HEK293 (cell line): ENCODE measurements at regions of chr13 and their contacts with region 1.

Region 1: GRCh38 chr13:96958286-96958891 is 35.9 kb downstream of the OXGR1 start:
- H3K4me3 ChIP-seq: no peak overlapping the region
- H3K27ac ChIP-seq: no peak overlapping the region
- H3K4me1 ChIP-seq: no peaks in the 10 kb centered on the region
- CTCF ChIP-seq: 0 out of 2 replicates have a peak, but pooled peaks have one; percentile 13

Region 2: DNA sequence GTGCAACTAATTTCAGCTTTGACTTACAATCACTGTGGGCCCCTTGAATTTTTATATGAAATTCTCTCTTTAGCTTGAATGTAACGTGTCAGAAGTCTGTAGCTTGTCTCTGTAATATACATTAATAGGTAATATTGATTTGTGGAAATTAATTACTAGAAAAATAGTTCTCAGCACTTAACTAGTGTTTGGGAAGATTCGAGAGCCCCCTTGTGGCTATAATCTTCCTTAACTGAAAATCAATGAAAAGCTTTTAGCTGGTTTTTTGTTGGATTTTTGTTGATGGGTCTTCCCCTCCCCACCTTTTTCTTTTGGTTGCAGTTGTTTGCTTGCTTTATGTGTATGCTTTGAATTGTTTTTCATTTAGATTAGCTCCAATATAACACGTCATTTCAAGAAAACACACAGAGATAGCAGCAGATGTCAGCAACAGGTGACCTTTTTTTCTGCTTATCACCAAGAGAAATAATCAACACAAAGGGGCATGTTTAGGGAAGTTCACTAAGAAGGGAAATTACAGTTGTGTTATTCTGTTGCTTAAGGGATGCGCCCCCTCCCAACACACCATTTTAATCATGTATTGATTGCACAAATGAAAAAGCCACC is 140.9 kb before region 1 on chr13:
- CTCF ChIA-PET with region 1: interaction called, 10 read pairs
- POLR2A ChIA-PET with region 1: no interaction called
- H3K4me3 ChIP-seq: no peak overlapping the region
- H3K27ac ChIP-seq: no peak overlapping the region
- H3K4me1 ChIP-seq: no peaks in the 10 kb centered on the region
- CTCF ChIP-seq: no peak

Region 3: DNA sequence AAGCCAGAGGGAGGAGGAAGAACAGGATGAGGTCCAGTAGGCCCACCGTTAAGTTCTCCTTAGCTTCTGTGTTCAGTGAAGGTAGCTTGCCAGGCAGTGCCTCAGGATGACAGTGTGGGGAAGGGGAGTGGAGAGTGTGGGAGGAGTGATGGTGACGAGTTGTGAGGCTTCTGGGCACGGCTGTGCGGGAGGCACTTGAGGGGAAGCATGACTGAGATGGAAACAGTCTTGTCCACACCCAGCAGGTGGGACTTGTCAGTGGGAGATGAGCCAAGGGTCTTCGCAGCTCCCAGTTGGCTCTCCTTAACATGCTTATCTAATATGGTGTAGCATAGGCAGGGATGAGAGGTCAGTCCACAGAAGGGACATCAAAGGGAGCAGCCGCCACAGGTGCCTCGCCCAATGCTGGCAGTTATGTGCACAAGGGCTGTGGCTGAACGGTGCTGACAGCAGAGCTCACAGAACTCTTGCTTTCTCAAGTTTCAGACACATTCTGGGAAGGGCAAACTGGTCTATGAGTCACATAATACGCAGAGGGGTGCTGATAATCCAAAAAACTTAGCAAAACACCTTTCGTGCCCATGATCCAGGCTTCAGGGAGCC is 11.6 kb before region 1 on chr13:
- CTCF ChIA-PET with region 1: interaction called, 12 read pairs
- POLR2A ChIA-PET with region 1: no interaction called
- H3K4me3 ChIP-seq: no peak overlapping the region
- H3K27ac ChIP-seq: no peak overlapping the region
- H3K4me1 ChIP-seq: no peaks in the 10 kb centered on the region
- CTCF ChIP-seq: no peak

Region 4: DNA sequence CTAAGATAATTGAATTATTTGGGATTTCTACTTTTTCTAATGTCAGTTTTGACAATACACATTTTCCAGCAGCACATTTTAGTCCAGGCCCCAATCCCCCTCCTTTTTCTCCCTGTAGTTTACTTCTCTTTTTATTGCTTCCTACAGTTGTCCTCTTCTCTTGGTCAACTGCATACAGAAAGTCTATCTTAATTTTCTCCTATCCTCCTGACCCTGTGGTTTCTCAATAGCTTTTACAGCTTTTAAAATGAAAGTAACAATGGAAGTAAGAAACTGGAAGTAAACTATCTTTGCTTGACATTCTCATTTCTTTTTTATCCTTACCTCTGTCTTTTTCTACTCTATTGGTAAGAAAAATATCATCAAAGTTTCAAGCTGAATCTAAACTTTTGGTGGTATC is 142.4 kb after region 1 on chr13:
- CTCF ChIA-PET with region 1: no interaction called
- POLR2A ChIA-PET with region 1: no interaction called
- H3K4me3 ChIP-seq: no peak overlapping the region
- H3K27ac ChIP-seq: no peak overlapping the region
- H3K4me1 ChIP-seq: no peaks in the 10 kb centered on the region
- CTCF ChIP-seq: no peak